Tibial artery (tissue), 4 donors: ENCODE measurements at regions of chr3 and their contacts with region 1.

Region 1: GRCh38 chr3:15815696-15816095 is 17.9 kb upstream of the ANKRD28 start:
- DNase-seq: no peak
- H3K4me3 ChIP-seq: no peak overlapping the region
- H3K27ac ChIP-seq: no peak overlapping the region
- H3K4me1 ChIP-seq: peaks cover 0 to 13% (median 0%) of the 10 kb centered on the region in 4 donors
- H3K27me3 ChIP-seq: no peaks in the 10 kb centered on the region
- CTCF ChIP-seq: peak; percentile 50

Region 2: DNA sequence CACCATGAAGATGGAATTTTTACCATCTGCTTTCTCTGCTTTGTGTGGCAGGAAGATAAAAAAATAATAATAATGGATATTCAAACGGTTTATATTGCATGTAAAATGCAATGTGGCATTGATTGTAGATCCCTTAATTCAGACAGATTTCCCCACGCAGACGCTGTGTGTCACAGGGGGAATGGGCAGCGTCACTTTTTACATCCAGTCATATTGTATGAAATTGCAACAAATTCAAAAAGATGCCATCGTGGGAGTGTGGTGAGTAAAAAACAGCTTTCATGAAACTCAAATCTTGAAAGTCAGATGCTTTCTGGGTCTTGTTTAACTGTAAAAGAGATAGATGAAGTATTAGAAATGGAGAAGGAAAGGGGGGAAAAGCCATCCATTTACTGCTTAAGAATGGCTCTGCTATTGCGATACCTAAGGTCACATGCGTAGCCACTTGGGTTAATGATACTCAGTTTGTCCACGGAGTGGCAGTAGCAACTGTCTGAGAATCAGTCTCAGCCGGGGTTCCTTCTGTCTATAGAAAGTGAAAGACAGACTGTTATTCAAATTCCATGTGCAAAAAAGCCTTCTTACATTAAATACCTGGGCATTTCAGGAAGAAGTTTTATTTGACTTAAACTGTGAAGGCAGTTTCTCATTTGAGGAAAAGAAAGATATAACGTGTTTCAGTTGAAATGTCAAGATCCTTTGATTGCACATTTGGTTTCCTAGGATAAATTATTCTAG is 185.7 kb before region 1 on chr3:
- intact Hi-C with region 1: loop called (anchors 2 kb)
- DNase-seq: peak in 1 of 2 donors; percentile 71
- H3K4me3 ChIP-seq: peak overlapping the region; percentile 26 to 31
- H3K27ac ChIP-seq: peak overlapping the region; percentile 23 to 42
- H3K4me1 ChIP-seq: peaks cover 0 to 31% (median 12%) of the 10 kb centered on the region in 4 donors
- H3K27me3 ChIP-seq: no peaks in the 10 kb centered on the region
- CTCF ChIP-seq: peak; percentile 80 to 84

Region 3: DNA sequence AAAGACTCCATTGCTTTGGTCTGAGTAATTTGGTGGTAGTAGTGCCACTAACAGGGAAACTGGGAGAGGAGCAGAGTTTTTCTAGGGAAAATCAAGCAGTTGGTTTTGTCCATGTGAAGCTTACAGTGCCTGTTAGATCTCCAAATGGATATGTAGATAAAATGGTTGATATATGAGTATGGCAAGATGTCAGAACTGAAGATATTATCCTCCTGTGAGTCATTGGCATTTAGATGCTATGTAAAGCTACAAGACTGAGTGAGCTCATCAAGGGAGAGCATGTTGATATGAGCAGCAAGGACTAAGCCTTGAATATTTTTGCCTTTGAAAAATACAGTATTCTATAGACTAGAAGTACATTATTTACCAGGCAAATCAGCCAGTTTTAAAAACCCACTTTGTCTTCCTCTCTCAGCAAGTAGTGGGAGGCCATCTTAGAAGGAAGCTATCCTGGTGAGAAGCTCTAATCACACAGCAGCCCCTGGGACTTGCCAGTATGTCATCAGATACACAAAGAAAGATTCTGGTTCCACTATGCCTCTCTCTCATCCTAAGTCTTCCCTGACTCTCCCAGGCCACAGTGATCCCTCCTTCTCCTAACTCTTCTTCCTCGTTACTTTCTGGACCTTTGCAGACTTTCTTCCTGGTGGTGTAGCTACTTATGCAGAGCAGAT is 59.5 kb after region 1 on chr3:
- intact Hi-C with region 1: no loop called
- DNase-seq: no peak
- H3K4me3 ChIP-seq: no peak overlapping the region
- H3K27ac ChIP-seq: no peak overlapping the region
- H3K4me1 ChIP-seq: no peaks in the 10 kb centered on the region
- H3K27me3 ChIP-seq: no peaks in the 10 kb centered on the region
- CTCF ChIP-seq: no peak

Region 4: GRCh38 chr3:15964605-15965442 is 149.1 kb after region 1 on chr3:
- intact Hi-C with region 1: no loop called
- DNase-seq: peak in 1 of 2 donors; percentile 41
- H3K4me3 ChIP-seq: no peak overlapping the region
- H3K27ac ChIP-seq: no peak overlapping the region
- H3K4me1 ChIP-seq: no peaks in the 10 kb centered on the region
- H3K27me3 ChIP-seq: no peaks in the 10 kb centered on the region
- CTCF ChIP-seq: no peak